ENCODE measurements at regions of chr21 and their contacts with region 1.

Region 1: DNA sequence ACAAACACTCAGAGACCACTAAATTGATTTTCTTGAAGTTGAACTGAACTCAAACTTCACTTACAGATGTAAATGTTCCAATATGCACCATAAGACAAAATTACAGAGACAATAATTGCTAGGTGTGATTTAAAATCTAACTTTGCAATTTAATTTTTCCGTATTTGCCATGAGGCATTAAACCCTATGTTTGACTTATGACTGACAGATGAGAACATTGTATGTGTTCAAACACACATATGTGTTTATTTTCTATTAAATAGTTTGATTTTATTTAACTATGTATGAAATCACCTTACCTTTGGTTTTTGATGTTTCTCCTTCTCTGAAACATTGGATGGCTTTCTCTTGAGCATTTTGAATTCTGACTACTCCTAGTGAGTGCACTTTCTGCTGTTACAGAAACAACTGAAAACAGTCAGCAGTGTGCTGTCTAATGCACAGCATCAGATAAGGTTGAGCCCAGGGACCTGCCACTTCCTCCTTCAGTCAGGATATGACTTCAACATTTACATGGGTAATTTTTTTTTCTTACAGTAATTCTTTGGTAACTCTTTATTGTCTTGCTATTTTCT is at the start of gene SAMSN1:
- DNase-seq: peak; percentile 92
- H3K4me3 Mint-ChIP-seq: peak within 1 kb of the TSS; percentile 95
- H3K27ac Mint-ChIP-seq: peak within 1 kb of the TSS; percentile 91
- H3K4me1 Mint-ChIP-seq: peaks cover 52% of the 10 kb centered on the region
- H3K27me3 Mint-ChIP-seq: no peaks in the 10 kb centered on the region
- total RNA-seq, gene SAMSN1: 86.4 and 92.7 TPM in 2 replicates

Region 2: GRCh38 chr21:14382835-14383594 is 163.0 kb before region 1 on chr21 and contains the start of gene HSPA13:
- intact Hi-C with region 1: loop called (anchors 2 kb)
- DNase-seq: peak; percentile 100
- H3K4me3 Mint-ChIP-seq: peak within 1 kb of the TSS; percentile 94
- H3K27ac Mint-ChIP-seq: peak within 1 kb of the TSS; percentile 96
- H3K4me1 Mint-ChIP-seq: peaks cover 35% of the 10 kb centered on the region
- H3K27me3 Mint-ChIP-seq: peaks cover 2% of the 10 kb centered on the region
- total RNA-seq, gene HSPA13: 40.9 and 41.6 TPM in 2 replicates

Region 3: GRCh38 chr21:14487490-14488432 is 58.2 kb before region 1 on chr21:
- intact Hi-C with region 1: loop called (anchors 2 kb)
- DNase-seq: no peak
- H3K4me3 Mint-ChIP-seq: peak overlapping the region; percentile 28
- H3K27ac Mint-ChIP-seq: peak overlapping the region; percentile 87
- H3K4me1 Mint-ChIP-seq: peaks cover 60% of the 10 kb centered on the region
- H3K27me3 Mint-ChIP-seq: no peaks in the 10 kb centered on the region

Region 4: GRCh38 chr21:14533504-14534428 is 12.2 kb before region 1 on chr21:
- intact Hi-C with region 1: loop called (anchors 1 kb)
- DNase-seq: peak; percentile 79
- H3K4me3 Mint-ChIP-seq: peak overlapping the region; percentile 85
- H3K27ac Mint-ChIP-seq: peak overlapping the region; percentile 100
- H3K4me1 Mint-ChIP-seq: peaks cover 59% of the 10 kb centered on the region
- H3K27me3 Mint-ChIP-seq: no peaks in the 10 kb centered on the region

Region 5: GRCh38 chr21:14591882-14592281 is 45.9 kb after region 1 on chr21:
- intact Hi-C with region 1: loop called (anchors 2 kb)
- DNase-seq: peak; percentile 75
- H3K4me3 Mint-ChIP-seq: peak overlapping the region; percentile 36
- H3K27ac Mint-ChIP-seq: peak overlapping the region; percentile 65
- H3K4me1 Mint-ChIP-seq: peaks cover 26% of the 10 kb centered on the region
- H3K27me3 Mint-ChIP-seq: no peaks in the 10 kb centered on the region

Region 6: GRCh38 chr21:14675774-14676530 is 130.0 kb after region 1 on chr21:
- intact Hi-C with region 1: loop called (anchors 5 kb)
- DNase-seq: peak; percentile 75
- H3K4me3 Mint-ChIP-seq: peak overlapping the region; percentile 74
- H3K27ac Mint-ChIP-seq: peak overlapping the region; percentile 93
- H3K4me1 Mint-ChIP-seq: peaks cover 38% of the 10 kb centered on the region
- H3K27me3 Mint-ChIP-seq: no peaks in the 10 kb centered on the region

Region 7: DNA sequence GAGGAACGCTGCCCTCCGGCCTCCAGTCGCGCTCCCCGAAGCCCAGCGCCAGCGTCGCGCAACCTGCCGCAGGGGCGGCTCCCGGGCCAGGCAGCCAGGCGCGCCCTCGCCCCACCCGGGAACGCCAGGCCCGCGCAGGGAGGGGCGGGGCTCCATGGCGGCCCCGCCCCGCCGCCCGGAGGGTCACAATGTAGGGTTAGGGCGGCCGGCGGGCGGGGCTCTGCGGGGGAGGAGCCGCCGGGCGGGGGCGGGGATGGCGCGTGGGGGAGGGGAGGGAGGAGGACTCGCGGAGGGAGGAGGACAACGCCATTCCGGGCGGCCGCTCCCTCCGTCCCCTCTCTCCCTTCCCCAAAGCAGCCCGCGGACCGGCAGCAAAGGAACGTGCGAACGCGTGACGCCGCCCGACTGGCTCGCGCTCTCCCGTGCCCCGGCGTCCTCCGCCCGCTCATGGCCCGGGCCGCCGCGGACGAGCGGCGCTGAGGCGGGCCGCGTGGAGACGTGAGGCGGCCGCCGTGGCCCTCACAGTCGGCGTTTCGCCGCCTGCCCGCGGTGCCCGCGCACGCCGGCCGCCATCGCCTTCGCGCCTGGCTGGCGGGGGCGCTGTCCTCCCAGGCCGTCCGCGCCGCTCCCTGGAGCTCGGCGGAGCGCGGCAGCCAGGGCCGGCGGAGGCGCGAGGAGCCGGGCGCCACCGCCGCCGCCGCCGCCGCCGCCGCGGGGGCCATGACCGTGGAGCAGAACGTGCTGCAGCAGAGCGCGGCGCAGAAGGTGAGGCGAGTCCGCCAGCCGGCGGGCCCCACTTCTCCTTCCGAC is 1183.9 kb after region 1 on chr21 and contains the start of gene USP25:
- intact Hi-C with region 1: loop called (anchors 5 kb)
- DNase-seq: peak; percentile 94
- H3K4me3 Mint-ChIP-seq: peak within 1 kb of the TSS; percentile 94
- H3K27ac Mint-ChIP-seq: peak within 1 kb of the TSS; percentile 92
- H3K4me1 Mint-ChIP-seq: peaks cover 12% of the 10 kb centered on the region
- H3K27me3 Mint-ChIP-seq: peaks cover 21% of the 10 kb centered on the region
- total RNA-seq, gene USP25: 27.3 and 29.0 TPM in 2 replicates